Activated naive CD8-positive, alpha-beta T cell treated with anti-CD3 and anti-CD28 coated beads, Interleukin-2, amount 10 ng/mL, durations not matched to agents 7 days and 5 days (primary cell): ENCODE measurements at regions of chr16 and their contacts with region 1.

Region 1: GRCh38 chr16:69166221-69166833 is 20.6 kb upstream of the SNTB2 start:
- DNase-seq: peak; percentile 39
- ATAC-seq: peak; percentile 93
- H3K4me3 Mint-ChIP-seq: peak overlapping the region; percentile 8
- H3K27ac Mint-ChIP-seq: peak overlapping the region; percentile 78
- H3K4me1 Mint-ChIP-seq: peaks cover 20% of the 10 kb centered on the region
- H3K27me3 Mint-ChIP-seq: no peaks in the 10 kb centered on the region

Region 2: DNA sequence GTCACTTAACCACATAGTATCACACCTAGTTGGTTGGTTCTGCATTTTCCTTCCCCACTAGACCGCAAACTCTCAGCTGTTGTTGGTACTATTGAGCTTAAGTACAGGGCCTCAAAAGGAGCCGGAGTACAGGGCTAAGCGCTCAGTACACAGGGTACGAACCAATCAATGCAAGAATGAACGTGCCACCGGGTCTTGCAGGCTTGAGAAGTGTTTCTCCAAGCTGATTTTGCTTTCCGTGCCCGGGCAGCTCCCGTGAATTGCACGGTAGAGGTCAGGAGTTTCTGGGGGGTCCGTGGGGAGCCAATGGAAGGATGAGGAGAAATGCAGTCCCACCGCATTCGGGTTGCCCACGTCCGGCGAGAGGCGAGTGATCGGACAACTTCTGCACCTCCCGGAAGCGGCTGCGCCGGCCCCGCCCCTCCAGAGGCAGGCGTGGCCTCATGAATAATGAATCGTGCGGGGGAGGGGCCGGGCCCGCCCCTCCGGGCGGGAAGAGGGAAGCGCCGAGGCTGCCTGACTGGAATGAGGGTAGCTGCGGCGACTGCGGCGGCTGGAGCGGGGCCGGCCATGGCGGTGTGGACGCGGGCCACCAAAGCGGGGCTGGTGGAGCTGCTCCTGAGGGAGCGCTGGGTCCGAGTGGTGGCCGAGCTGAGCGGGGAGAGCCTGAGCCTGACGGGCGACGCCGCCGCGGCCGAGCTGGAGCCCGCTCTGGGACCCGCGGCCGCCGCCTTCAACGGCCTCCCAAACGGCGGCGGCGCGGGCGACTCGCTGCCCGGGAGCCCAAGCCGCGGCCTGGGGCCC is 20.5 kb after region 1 on chr16 and contains the start of gene SNTB2:
- POLR2A ChIA-PET with region 1: interaction called, 24 read pairs
- DNase-seq: peak; percentile 93
- ATAC-seq: peak; percentile 86
- H3K4me3 Mint-ChIP-seq: peak within 1 kb of the TSS; percentile 98
- H3K27ac Mint-ChIP-seq: peak within 1 kb of the TSS; percentile 99
- H3K4me1 Mint-ChIP-seq: peaks cover 37% of the 10 kb centered on the region
- H3K27me3 Mint-ChIP-seq: peaks cover 2% of the 10 kb centered on the region
- total RNA-seq, gene SNTB2: 19.1 to 24.1 TPM